ENCODE measurements at regions of chr1 and their contacts with region 1.

Region 1: GRCh38 chr1:206741142-206741701 is 29.4 kb upstream of the IL19 start:
- DNase-seq: no peak
- H3K27ac ChIP-seq: no peak overlapping the region
- CTCF ChIP-seq: no peak

Region 2: DNA sequence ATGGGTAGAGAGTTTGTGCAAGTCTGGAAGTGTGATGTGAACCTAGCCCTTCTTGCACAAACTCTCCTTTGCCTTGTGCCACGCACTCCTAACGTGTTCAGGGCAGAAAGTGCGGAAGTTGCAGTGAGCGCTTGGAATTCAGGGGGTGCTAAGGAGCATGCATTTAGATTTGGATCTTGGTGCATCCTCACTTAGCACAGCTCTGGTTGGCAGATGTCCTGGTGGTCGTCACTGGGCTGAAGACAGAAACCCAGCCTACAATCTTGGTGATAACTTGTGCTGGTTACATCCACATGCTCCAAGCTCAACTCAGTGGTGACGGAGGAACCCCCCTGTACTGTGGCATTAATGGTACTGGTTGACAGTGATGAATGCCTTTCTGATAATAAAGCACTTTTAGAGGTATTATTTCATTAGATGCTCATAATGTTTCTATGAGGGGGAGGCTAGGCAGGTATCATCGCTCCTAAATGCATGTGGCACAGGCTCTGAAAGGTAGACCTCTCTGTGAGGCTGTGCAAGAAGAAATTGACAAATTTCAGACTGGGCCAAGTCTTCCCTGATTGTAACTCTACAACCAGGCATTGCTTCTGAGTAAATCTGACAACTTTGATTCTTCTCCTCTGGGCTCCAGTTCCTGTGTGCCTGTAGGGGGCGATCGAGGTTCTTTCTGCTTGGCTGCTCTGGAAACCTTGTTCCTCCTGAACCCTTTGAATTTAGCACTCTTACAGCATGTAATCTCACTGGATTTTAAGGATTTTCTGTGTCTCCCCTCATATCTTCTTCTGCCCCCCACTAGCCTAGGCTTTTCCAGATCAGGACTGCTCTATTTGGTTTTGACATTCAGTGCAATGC is 15.9 kb before region 1 on chr1:
- CTCF ChIA-PET with region 1: interaction called, 10 read pairs
- POLR2A ChIA-PET with region 1: no interaction called
- DNase-seq: no peak
- H3K27ac ChIP-seq: no peak overlapping the region
- CTCF ChIP-seq: no peak; the same call in 1 of the 2 replicates

Region 3: GRCh38 chr1:206839857-206840256 is 98.6 kb after region 1 on chr1:
- CTCF ChIA-PET with region 1: no interaction called
- POLR2A ChIA-PET with region 1: no interaction called
- DNase-seq: peak; percentile 66
- H3K27ac ChIP-seq: no peak overlapping the region
- CTCF ChIP-seq: no peak

Measured in RWPE1 (cell line).